Aorta (tissue), 5 donors: ENCODE measurements at regions of chr10 and their contacts with region 1.

Region 1: GRCh38 chr10:30783939-30784500 is 154.5 kb upstream of the LYZL2 start:
- DNase-seq: peak; percentile 92 to 97
- ATAC-seq: peak; percentile 92
- H3K4me3 ChIP-seq: peak overlapping the region; percentile 61 to 83
- H3K27ac ChIP-seq: peak overlapping the region; percentile 90 to 97
- H3K4me1 ChIP-seq: no peaks in the 10 kb centered on the region
- H3K27me3 ChIP-seq: no peaks in the 10 kb centered on the region

Region 2: DNA sequence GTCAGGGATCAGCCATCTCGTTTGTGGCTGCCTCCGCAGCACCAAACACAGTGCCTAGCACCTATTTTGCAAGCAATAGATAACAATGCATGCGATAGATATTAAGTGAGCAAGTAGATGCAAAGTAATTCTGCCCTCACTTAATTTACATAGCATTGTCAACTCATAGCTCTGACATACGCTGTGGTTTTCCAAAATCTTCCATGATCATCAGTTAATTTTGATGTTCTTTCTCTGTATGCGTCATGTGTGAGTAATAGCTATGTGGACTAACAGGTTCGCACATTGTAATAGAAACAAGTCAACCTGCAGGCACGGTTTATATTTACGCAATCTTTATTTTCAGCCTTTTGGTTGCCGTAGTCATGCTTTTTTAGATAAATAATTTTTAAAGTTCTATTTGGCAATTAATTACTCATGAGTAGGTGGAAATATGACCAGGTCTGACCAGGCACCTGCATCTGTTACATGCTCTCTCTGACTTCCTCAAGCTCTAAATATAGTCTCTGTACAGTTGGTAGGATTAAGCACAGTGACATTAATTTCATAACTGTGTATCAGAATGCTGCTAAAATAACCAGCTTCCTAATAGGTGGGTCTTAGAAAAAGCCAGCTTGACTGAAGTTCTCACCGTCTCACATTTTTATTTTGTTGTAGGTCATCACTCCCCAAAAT is 336.8 kb before region 1 on chr10:
- intact Hi-C with region 1: no loop called
- DNase-seq: no peak
- ATAC-seq: no peak
- H3K4me3 ChIP-seq: no peak overlapping the region
- H3K27ac ChIP-seq: peak overlapping the region in 1 of 2 donors; percentile 43
- H3K4me1 ChIP-seq: peaks cover 4 to 15% of the 10 kb centered on the region in 2 donors
- H3K27me3 ChIP-seq: no peaks in the 10 kb centered on the region

Region 3: DNA sequence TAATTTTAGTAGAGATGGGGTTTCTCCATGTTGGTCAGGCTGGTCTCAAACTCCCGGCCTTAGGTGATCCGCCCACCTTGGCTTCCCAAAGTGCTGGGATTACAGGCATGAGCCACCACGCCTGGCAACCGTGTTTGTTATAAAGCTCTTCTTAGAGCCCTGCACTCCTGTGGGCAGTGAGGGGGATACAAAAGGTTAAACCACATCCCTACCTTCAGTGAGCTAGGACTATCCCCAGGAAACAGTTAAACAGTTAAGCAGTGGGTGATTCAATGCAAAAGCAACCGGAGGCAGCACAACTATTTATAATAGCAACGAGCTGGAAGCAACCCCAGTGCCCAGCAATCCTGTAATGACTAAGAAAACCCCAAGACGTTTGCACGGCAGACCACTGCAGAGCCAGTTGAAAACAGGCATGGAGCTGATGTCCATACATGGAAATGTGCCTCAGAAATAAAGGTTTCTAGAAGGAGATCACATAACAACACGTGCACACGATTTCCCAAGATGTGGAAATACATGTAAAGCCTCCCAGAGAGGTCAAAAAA is 47.3 kb before region 1 on chr10:
- intact Hi-C with region 1: loop called in 1 of 2 experiments (anchors 5 kb)
- DNase-seq: peak; percentile 81 to 84
- ATAC-seq: peak; percentile 84
- H3K4me3 ChIP-seq: no peak overlapping the region
- H3K27ac ChIP-seq: peak overlapping the region in 1 of 2 donors; percentile 12
- H3K4me1 ChIP-seq: peaks cover 0 to 3% of the 10 kb centered on the region in 2 donors
- H3K27me3 ChIP-seq: no peaks in the 10 kb centered on the region

Region 4: DNA sequence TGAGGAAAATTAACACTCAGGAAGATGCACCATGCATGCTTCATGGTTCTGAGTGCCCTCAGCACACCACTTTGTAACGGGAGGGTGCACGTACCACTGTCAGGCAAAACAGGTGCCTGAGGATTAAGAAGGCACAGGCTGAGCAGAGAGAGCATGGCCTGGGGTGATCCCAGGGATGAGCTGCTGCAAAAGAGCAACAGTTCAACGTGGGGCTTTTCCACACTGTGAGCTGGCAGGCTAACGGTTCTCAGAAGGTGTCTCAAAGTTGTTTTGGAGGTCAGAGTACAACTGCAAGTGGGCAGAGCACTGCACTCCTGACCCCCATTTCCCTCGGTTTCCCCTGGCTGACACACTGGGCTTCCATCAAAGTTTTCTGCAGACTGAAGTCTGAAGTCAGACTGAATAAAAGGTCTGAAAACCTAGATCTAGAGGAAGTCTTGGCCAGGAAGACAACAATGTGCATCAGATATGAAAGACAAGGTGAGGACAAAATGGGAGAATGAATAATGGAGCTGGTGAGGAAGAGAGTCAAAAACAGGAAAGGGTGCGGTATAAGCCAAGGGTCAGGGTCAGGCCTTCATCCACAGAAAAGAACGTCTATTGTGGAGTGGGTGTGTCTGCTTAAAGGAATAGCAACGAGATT is 227.1 kb after region 1 on chr10:
- intact Hi-C with region 1: loop called in 1 of 2 experiments (anchors 10 kb)
- DNase-seq: no peak
- ATAC-seq: peak; percentile 32
- H3K4me3 ChIP-seq: no peak overlapping the region
- H3K27ac ChIP-seq: peak overlapping the region in 1 of 2 donors; percentile 4
- H3K4me1 ChIP-seq: peaks cover 0 to 8% of the 10 kb centered on the region in 2 donors
- H3K27me3 ChIP-seq: no peaks in the 10 kb centered on the region

Region 5: GRCh38 chr10:31479752-31480151 is 695.7 kb after region 1 on chr10:
- intact Hi-C with region 1: loop called in 1 of 2 experiments (anchors 10 kb)
- DNase-seq: no peak
- ATAC-seq: no peak
- H3K4me3 ChIP-seq: no peak overlapping the region
- H3K27ac ChIP-seq: no peak overlapping the region
- H3K4me1 ChIP-seq: no peaks in the 10 kb centered on the region
- H3K27me3 ChIP-seq: no peaks in the 10 kb centered on the region

Region 6: GRCh38 chr10:31603235-31604087 is 819.4 kb after region 1 on chr10:
- intact Hi-C with region 1: loop called in 1 of 2 experiments (anchors 10 kb)
- DNase-seq: peak; percentile 98 to 99
- ATAC-seq: peak; percentile 96
- H3K4me3 ChIP-seq: peak overlapping the region; percentile 13 to 35
- H3K27ac ChIP-seq: peak overlapping the region in 1 of 2 donors; percentile 22
- H3K4me1 ChIP-seq: no peaks in the 10 kb centered on the region
- H3K27me3 ChIP-seq: no peaks in the 10 kb centered on the region